GM10248 (cell line): ENCODE measurements at regions of chr15 and their contacts with region 1.

Region 1: DNA sequence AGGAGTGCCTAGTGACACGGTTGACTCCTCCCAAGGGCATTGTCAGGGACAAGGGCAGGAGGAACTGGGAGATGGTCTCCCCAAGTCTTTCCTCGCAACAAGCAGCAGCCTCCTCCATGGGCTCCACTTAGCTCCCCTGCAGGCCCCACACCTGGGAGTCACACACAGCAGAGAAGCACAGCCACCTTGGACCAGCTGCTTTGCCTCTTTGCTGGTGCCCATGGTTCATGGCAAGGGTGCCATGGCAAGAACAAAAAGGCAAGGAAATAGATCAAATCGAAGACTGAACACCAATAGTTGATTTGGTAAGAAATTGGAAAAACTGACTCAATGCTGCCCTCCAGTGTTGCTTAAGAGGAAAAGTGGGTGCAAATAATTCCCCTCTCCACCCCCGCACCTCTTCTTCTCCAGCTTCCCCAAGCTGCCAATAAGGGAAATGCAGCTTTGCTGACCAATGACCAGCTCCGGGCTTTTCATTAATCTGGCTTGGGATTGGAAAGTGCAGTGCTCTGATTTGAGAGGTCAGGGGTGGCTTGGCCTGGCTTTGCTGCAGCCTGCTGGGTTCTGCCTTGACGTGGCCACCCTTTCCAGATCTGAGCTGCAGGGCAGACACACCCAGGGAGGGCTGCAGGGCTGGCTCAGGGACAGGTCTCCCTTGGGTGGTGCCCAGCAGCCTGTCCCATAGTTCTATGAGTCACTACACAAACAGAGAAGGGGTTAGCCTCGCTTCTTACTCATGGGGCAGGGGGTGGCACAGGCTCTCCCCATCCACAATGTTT is 162.0 kb downstream of the KLF13 start:
- DNase-seq: peak; percentile 81
- CTCF ChIP-seq: peak; percentile 63

Region 2: GRCh38 chr15:31200735-31201151 is 287.9 kb before region 1 on chr15:
- CTCF ChIA-PET with region 1: interaction called, 24 read pairs
- POLR2A ChIA-PET with region 1: no interaction called
- DNase-seq: no peak
- CTCF ChIP-seq: peak; percentile 74

Region 3: DNA sequence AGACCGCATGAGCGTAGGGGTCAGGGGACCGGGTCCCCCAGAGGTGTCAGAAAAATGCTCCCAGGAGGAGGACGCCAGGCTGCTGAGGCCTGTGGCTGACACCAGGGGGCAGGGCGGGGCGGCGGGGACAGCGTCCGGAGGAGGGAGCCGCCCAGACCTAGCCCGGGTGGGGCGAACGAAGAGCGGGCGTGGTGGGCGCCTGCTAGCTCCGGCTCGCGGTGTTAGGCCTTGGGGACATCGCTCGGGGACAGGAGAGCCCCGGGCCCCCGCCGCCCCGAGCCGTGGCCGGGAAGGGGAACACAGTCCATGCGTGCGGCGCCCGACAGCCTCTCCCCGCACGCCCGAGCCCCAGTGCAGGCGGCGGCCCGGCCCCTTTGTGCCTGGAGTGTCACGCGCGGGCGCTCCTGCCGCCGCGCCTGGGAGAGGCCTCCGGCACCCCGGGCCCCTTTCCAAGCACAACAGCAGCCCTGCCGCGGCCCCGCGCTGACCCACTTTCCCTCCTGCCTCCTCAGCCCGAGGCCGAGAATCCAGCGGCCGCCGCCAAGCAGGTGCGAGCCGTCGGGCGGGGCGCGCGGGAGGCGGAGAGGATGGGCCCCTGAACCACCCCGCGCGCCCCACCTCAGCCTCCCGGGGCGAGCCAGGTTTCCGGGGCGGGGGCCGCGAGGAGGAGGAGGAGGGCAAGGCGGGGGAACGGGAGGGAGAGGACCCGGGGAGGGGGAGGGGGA is 273.0 kb before region 1 on chr15:
- CTCF ChIA-PET with region 1: interaction called, 27 read pairs
- POLR2A ChIA-PET with region 1: no interaction called
- DNase-seq: peak; percentile 91
- CTCF ChIP-seq: peak; percentile 94

Region 4: GRCh38 chr15:31265871-31266711 is 222.5 kb before region 1 on chr15:
- CTCF ChIA-PET with region 1: interaction called, 14 read pairs
- POLR2A ChIA-PET with region 1: no interaction called
- DNase-seq: peak; percentile 84
- CTCF ChIP-seq: no peak

Region 5: GRCh38 chr15:31365655-31366127 is 122.9 kb before region 1 on chr15:
- CTCF ChIA-PET with region 1: interaction called, 43 read pairs
- POLR2A ChIA-PET with region 1: no interaction called
- DNase-seq: peak; percentile 79
- CTCF ChIP-seq: peak; percentile 64

Region 6: GRCh38 chr15:31458591-31459399 is 29.8 kb before region 1 on chr15:
- CTCF ChIA-PET with region 1: interaction called, 22 read pairs
- POLR2A ChIA-PET with region 1: no interaction called
- DNase-seq: peak; percentile 81
- CTCF ChIP-seq: no peak

Region 7: DNA sequence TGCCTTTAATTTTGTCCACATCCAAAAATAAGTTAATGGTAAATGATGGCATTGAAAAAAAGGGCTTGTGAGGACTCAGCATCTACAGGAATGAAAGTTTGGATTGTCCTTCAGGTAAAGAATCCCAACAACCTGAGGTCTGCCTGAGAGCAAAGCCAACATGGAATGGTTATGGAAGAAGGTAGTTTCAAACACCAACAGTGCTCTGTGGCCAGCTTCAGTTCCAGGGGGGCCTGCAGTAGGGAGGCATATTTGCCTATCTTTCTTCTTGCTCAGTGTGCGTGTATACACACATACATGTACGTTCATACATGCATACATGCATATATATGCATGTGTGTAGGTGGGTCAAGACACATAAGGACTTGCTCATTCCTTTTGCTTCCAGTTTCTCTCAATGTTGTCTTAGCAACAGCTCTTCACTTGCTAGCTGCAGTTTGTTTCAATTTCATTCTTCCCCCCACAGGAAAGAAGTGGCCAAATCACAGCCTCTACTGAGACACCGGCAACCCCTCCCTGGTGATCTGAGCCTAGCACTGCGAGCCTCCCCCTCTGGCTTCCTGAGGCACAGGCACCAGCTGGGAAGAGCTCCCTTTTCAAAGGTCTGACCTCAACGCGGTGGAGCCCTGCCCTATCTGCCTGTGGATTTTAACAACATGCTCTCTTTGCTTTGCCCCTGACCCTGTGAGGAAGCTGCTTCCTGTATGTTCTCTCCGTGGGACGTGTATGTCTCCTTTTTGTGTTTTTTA is 15.8 kb before region 1 on chr15:
- CTCF ChIA-PET with region 1: interaction called, 158 read pairs
- POLR2A ChIA-PET with region 1: no interaction called
- DNase-seq: peak; percentile 83
- CTCF ChIP-seq: no peak